ENCODE measurements at regions of chr19 and their contacts with region 1.

Region 1: GRCh38 chr19:19488875-19489690 is 26.3 kb downstream of the TSSK6 start:
- DNase-seq: peak; percentile 75 to 84 (median 81)
- H3K4me3 ChIP-seq: no peak overlapping the region
- H3K27ac ChIP-seq: peak overlapping the region in 1 of 2 donors; percentile 81
- H3K4me1 ChIP-seq: peaks cover 23% of the 10 kb centered on the region
- H3K27me3 ChIP-seq: no peaks in the 10 kb centered on the region
- CTCF ChIP-seq: no peak
- EP300 ChIP-seq: no peak
- POLR2A ChIP-seq: no peak

Region 2: GRCh38 chr19:19145684-19146608 is 343.1 kb before region 1 on chr19:
- intact Hi-C with region 1: loop called in 2 of 4 experiments (anchors 5 to 10 kb)
- DNase-seq: peak; percentile 62 to 90 (median 85)
- H3K4me3 ChIP-seq: no peak overlapping the region
- H3K27ac ChIP-seq: no peak overlapping the region
- H3K4me1 ChIP-seq: no peaks in the 10 kb centered on the region
- H3K27me3 ChIP-seq: no peaks in the 10 kb centered on the region
- CTCF ChIP-seq: peak; percentile 89 to 93 (median 89)
- EP300 ChIP-seq: no peak
- POLR2A ChIP-seq: no peak

Region 3: GRCh38 chr19:19366612-19367396 is 122.3 kb before region 1 on chr19:
- intact Hi-C with region 1: loop called (anchors 5 kb)
- DNase-seq: peak in 4 of 5 donors; percentile 37 to 65 (median 59)
- H3K4me3 ChIP-seq: no peak overlapping the region
- H3K27ac ChIP-seq: no peak overlapping the region
- H3K4me1 ChIP-seq: no peaks in the 10 kb centered on the region
- H3K27me3 ChIP-seq: no peaks in the 10 kb centered on the region
- CTCF ChIP-seq: peak; percentile 16 to 67 (median 61)
- EP300 ChIP-seq: no peak
- POLR2A ChIP-seq: no peak

Region 4: GRCh38 chr19:19420570-19421298 is 68.3 kb before region 1 on chr19:
- intact Hi-C with region 1: loop called in 1 of 4 experiments (anchors 10 kb)
- DNase-seq: no peak
- H3K4me3 ChIP-seq: no peak overlapping the region
- H3K27ac ChIP-seq: no peak overlapping the region
- H3K4me1 ChIP-seq: peaks cover 10% of the 10 kb centered on the region
- H3K27me3 ChIP-seq: no peaks in the 10 kb centered on the region
- CTCF ChIP-seq: no peak
- EP300 ChIP-seq: no peak
- POLR2A ChIP-seq: no peak